T-cell (primary cell): ENCODE measurements at regions of chr6 and their contacts with region 1.

Region 1: GRCh38 chr6:34223956-34224940 is 12.4 kb upstream of the HMGA1 start:
- DNase-seq: peak; percentile 85 to 98 (median 92)
- ATAC-seq: peak; percentile 95 to 99 (median 99)
- H3K4me3 ChIP-seq: peak overlapping the region; percentile 61 to 69
- H3K4me3 Mint-ChIP-seq: peak overlapping the region; percentile 60 to 73 (median 64)
- H3K27ac ChIP-seq: peak overlapping the region; percentile 99
- H3K27ac Mint-ChIP-seq: peak overlapping the region; percentile 91
- H3K4me1 ChIP-seq: peaks cover 6 to 13% of the 10 kb centered on the region in 2 experiments
- H3K4me1 Mint-ChIP-seq: peaks cover 6 to 25% (median 17%) of the 10 kb centered on the region in 3 donors
- H3K27me3 ChIP-seq: no peaks in the 10 kb centered on the region
- H3K27me3 Mint-ChIP-seq: no peaks in the 10 kb centered on the region

Region 2: GRCh38 chr6:34174846-34175399 is 49.3 kb before region 1 on chr6:
- CTCF ChIA-PET with region 1: no interaction called
- POLR2A ChIA-PET with region 1: no interaction called
- DNase-seq: no peak
- ATAC-seq: no peak
- H3K4me3 ChIP-seq: no peak overlapping the region
- H3K4me3 Mint-ChIP-seq: no peak overlapping the region
- H3K27ac ChIP-seq: no peak overlapping the region
- H3K27ac Mint-ChIP-seq: peak overlapping the region in 1 of 2 donors; percentile 4
- H3K4me1 ChIP-seq: peaks cover 0 to 14% of the 10 kb centered on the region in 2 experiments
- H3K4me1 Mint-ChIP-seq: peaks cover 15 to 19% (median 18%) of the 10 kb centered on the region in 3 donors
- H3K27me3 ChIP-seq: peaks cover 0 to 7% of the 10 kb centered on the region in 2 experiments
- H3K27me3 Mint-ChIP-seq: no peaks in the 10 kb centered on the region

Region 3: GRCh38 chr6:34236131-34236996 is 12.1 kb after region 1 on chr6 and contains the start of gene HMGA1:
- CTCF ChIA-PET with region 1: interaction called, 4 read pairs
- POLR2A ChIA-PET with region 1: interaction called in 1 of 2 experiments, 10 read pairs
- DNase-seq: peak; percentile 77 to 95 (median 86)
- ATAC-seq: peak; percentile 72 to 76 (median 73)
- H3K4me3 ChIP-seq: peak within 1 kb of the TSS; percentile 75 to 94
- H3K4me3 Mint-ChIP-seq: peak within 1 kb of the TSS; percentile 86 to 91 (median 89)
- H3K27ac ChIP-seq: peak within 1 kb of the TSS; percentile 99
- H3K27ac Mint-ChIP-seq: peak within 1 kb of the TSS; percentile 96 to 97
- H3K4me1 ChIP-seq: peaks cover 15 to 35% of the 10 kb centered on the region in 2 experiments
- H3K4me1 Mint-ChIP-seq: peaks cover 29 to 35% (median 34%) of the 10 kb centered on the region in 3 donors
- H3K27me3 ChIP-seq: no peaks in the 10 kb centered on the region
- H3K27me3 Mint-ChIP-seq: no peaks in the 10 kb centered on the region
- total RNA-seq, gene HMGA1: 92.8 to 119 (median 104) TPM

Region 4: GRCh38 chr6:34248727-34249551 is 24.7 kb after region 1 on chr6 and contains the start of gene SMIM29:
- CTCF ChIA-PET with region 1: interaction called, 3 to 14 read pairs
- POLR2A ChIA-PET with region 1: no interaction called
- DNase-seq: peak; percentile 92 to 99 (median 97)
- ATAC-seq: peak; percentile 89 to 95 (median 90)
- H3K4me3 ChIP-seq: peak within 1 kb of the TSS; percentile 87 to 90
- H3K4me3 Mint-ChIP-seq: peak within 1 kb of the TSS; percentile 85 to 95 (median 90)
- H3K27ac ChIP-seq: peak within 1 kb of the TSS; percentile 90
- H3K27ac Mint-ChIP-seq: peak within 1 kb of the TSS; percentile 94 to 95
- H3K4me1 ChIP-seq: peaks cover 8 to 41% of the 10 kb centered on the region in 2 experiments
- H3K4me1 Mint-ChIP-seq: peaks cover 27 to 49% (median 40%) of the 10 kb centered on the region in 3 donors
- H3K27me3 ChIP-seq: no peaks in the 10 kb centered on the region
- H3K27me3 Mint-ChIP-seq: no peaks in the 10 kb centered on the region
- total RNA-seq, gene SMIM29: 16.4 to 33.8 (median 30.5) TPM